ENCODE measurements at regions of chr1 and their contacts with region 1.

Region 1: DNA sequence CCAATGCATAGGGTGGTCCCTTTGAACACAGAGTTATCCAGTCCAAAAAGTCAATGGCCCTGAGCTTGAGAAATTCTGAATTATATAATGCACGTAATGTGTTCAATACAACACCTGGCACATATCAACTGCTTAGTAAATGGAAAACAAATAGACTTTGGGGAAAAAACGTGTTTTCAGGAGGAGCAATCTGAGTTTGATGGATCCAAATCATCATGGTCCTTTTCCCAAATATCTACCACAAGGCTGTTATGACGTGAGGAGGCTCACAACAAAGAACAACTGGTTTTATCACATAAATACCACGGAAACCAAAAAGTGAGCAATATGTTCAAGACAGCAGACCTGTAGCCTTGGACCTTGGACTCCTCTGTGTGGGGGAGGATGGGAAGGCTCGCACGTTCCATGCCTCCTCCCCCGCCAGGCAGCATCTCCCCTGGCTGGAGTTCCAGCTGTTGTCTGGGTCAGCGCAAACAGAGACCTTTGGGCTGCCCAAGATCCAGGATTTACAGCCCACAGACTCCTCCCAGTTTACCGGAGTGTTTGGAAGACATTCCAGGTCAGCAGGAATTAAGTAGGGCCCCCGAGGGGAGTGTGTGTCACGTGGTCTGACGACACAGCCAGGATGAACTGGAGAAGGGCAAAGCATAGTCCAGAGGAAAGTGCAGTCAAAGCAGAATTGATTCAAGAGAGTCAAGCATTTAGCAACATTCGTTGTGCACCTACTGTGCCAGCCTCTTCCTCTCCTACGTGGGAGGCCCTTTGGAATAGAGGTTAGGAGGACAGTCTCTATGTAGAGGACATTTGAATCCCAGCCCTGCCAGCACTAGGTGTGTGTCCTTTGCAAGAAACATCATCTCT is 32.2 kb upstream of the MED18 start:
- DNase-seq: no peak
- ATAC-seq: no peak
- H3K4me3 Mint-ChIP-seq: no peak overlapping the region
- H3K27ac Mint-ChIP-seq: no peak overlapping the region
- H3K4me1 Mint-ChIP-seq: no peaks in the 10 kb centered on the region
- H3K27me3 Mint-ChIP-seq: no peaks in the 10 kb centered on the region

Region 2: DNA sequence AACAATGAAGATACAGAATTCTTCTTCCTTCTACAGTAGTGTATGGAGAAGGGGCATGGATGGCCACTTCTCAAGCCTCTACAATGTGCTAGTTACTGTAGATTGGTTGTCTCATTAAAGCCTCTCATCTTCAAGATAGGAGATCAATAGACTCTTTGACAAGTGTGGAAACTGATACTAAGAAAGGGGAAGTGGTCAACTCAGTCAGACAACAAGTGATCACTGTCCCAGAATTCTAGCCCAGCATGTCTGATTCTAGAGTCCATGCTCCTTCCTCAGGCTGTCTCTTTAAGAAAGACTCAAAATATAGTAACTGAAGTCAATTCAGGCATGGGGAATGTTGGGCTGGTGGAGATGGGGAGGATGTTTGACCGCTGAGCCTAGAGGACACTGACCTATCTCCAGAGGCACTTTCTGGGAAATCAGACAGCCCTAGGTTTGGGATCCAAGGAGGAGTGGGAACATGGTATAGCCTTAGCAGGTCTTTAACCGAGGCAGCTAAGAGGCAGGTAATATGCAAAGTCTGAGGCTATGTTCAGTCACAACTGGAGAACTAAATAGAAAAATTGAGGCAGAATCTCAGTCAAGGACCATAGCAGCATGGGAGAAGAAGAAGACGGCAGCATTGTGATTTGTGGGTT is 168.9 kb before region 1 on chr1:
- CTCF ChIA-PET with region 1: no interaction called
- POLR2A ChIA-PET with region 1: no interaction called
- intact Hi-C with region 1: loop called in 1 of 2 experiments (anchors 10 kb)
- DNase-seq: no peak
- ATAC-seq: no peak
- H3K4me3 Mint-ChIP-seq: no peak overlapping the region
- H3K27ac Mint-ChIP-seq: no peak overlapping the region
- H3K4me1 Mint-ChIP-seq: no peaks in the 10 kb centered on the region
- H3K27me3 Mint-ChIP-seq: peaks cover 18% of the 10 kb centered on the region